B cell (primary cell): ENCODE measurements at regions of chr10 and their contacts with region 1.

Region 1: GRCh38 chr10:6920072-6921019 is 340.3 kb upstream of the PRKCQ start:
- DNase-seq: peak; percentile 81
- ATAC-seq: peak; percentile 97
- H3K4me3 ChIP-seq: peak overlapping the region in 1 of 5 experiments; percentile 9
- H3K4me3 Mint-ChIP-seq: no peak overlapping the region
- H3K27ac ChIP-seq: no peak overlapping the region
- H3K27ac Mint-ChIP-seq: no peak overlapping the region
- H3K4me1 ChIP-seq: peaks cover 8 to 27% of the 10 kb centered on the region in 2 donors
- H3K4me1 Mint-ChIP-seq: peaks cover 24% of the 10 kb centered on the region
- H3K27me3 ChIP-seq: no peaks in the 10 kb centered on the region
- H3K27me3 Mint-ChIP-seq: no peaks in the 10 kb centered on the region
- CTCF ChIP-seq: peak; percentile 80

Region 2: GRCh38 chr10:7121154-7121810 is 200.9 kb after region 1 on chr10:
- CTCF ChIA-PET with region 1: interaction called, 37 read pairs
- POLR2A ChIA-PET with region 1: no interaction called
- intact Hi-C with region 1: loop called (anchors 1 kb)
- DNase-seq: peak; percentile 78
- ATAC-seq: peak; percentile 80
- H3K4me3 ChIP-seq: no peak overlapping the region
- H3K4me3 Mint-ChIP-seq: no peak overlapping the region
- H3K27ac ChIP-seq: no peak overlapping the region
- H3K27ac Mint-ChIP-seq: no peak overlapping the region
- H3K4me1 ChIP-seq: peaks cover 4 to 5% of the 10 kb centered on the region in 2 donors
- H3K4me1 Mint-ChIP-seq: peaks cover 5% of the 10 kb centered on the region
- H3K27me3 ChIP-seq: no peaks in the 10 kb centered on the region
- H3K27me3 Mint-ChIP-seq: peaks cover 11% of the 10 kb centered on the region
- CTCF ChIP-seq: peak; percentile 82

Region 3: DNA sequence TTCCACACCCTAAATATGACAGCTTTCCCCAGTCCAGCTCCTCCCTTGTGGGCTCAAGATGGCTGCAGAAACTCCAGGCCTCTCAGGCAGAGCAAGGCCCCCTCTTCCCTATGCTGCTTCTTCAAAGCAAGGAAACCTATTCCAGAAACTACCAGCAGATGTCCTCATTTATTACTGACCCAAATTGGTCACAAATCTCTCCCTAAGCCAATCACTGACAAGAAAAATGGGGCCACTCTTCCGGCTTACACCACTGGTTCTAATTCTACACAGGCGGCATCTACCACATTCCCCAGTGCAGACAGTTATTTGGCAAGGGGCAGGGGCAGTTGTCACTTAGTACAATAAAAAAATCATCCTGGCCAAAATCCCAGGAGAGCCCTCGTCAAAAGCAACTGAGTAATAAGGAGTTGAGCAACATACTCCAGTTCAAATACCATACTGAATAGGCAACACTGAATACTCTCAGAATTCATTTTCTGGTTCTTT is 340.1 kb after region 1 on chr10:
- CTCF ChIA-PET with region 1: no interaction called
- POLR2A ChIA-PET with region 1: no interaction called
- intact Hi-C with region 1: loop called (anchors 1 kb)
- DNase-seq: peak; percentile 71
- ATAC-seq: peak; percentile 80
- H3K4me3 ChIP-seq: no peak overlapping the region
- H3K4me3 Mint-ChIP-seq: no peak overlapping the region
- H3K27ac ChIP-seq: no peak overlapping the region
- H3K27ac Mint-ChIP-seq: no peak overlapping the region
- H3K4me1 ChIP-seq: peaks cover 13 to 23% of the 10 kb centered on the region in 2 donors
- H3K4me1 Mint-ChIP-seq: peaks cover 28% of the 10 kb centered on the region
- H3K27me3 ChIP-seq: no peaks in the 10 kb centered on the region
- H3K27me3 Mint-ChIP-seq: no peaks in the 10 kb centered on the region
- CTCF ChIP-seq: peak; percentile 75

Region 4: GRCh38 chr10:7424315-7424714 is 504.0 kb after region 1 on chr10:
- CTCF ChIA-PET with region 1: interaction called, 19 read pairs
- POLR2A ChIA-PET with region 1: no interaction called
- intact Hi-C with region 1: no loop called
- DNase-seq: no peak
- ATAC-seq: peak; percentile 41
- H3K4me3 ChIP-seq: no peak overlapping the region
- H3K4me3 Mint-ChIP-seq: no peak overlapping the region
- H3K27ac ChIP-seq: no peak overlapping the region
- H3K27ac Mint-ChIP-seq: no peak overlapping the region
- H3K4me1 ChIP-seq: no peaks in the 10 kb centered on the region
- H3K4me1 Mint-ChIP-seq: no peaks in the 10 kb centered on the region
- H3K27me3 ChIP-seq: no peaks in the 10 kb centered on the region
- H3K27me3 Mint-ChIP-seq: no peaks in the 10 kb centered on the region
- CTCF ChIP-seq: no peak